Right cardiac atrium (tissue), 5 donors: ENCODE measurements at regions of chr17 and their contacts with region 1.

Region 1: GRCh38 chr17:45385331-45385997 is 47.2 kb downstream of the ARHGAP27 start:
- DNase-seq: peak; percentile 90 to 96 (median 95)
- ATAC-seq: peak; percentile 91 to 94
- H3K4me3 ChIP-seq: no peak overlapping the region
- H3K27ac ChIP-seq: no peak overlapping the region
- H3K4me1 ChIP-seq: peaks cover 1% of the 10 kb centered on the region
- H3K27me3 ChIP-seq: no peaks in the 10 kb centered on the region

Region 2: DNA sequence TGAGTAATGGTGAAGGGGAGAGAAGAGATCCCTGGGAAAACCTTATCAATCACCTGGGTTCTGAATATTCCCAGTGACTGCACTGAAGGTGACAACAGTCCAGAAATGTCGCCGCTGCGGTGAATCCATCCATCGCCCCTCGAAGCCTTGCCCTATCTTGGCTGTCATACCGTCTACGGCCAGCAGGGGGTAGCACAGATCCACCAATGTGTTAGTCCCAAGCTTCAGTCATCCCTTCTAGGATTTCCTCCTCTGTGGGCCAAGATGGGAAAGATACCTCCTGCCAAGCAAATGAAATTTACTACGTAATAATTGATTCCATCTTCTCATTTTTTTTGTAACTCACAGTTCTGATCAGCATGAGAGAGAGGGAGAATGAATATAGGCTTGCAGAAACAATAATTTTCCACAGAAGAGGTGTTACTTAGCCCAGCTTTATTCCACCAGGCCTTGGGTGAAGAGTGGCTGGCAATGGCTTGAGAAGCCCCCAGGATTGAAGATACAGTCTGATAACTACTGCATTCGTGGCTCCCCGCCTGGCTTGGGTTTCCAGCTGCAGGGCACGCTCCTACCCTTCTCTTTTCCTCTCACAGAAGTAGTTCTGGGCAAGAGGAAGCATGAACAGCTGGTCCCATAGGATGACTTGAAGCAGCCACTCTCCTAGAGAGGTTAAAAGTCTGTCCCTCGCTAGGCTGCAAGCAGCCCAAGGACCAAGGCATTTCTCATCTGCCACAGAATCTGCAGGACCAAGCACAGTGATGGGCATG is 166.4 kb before region 1 on chr17:
- intact Hi-C with region 1: loop called (anchors 2 to 5 kb)
- DNase-seq: peak; percentile 82 to 95 (median 92)
- ATAC-seq: peak; percentile 75 to 81
- H3K4me3 ChIP-seq: no peak overlapping the region
- H3K27ac ChIP-seq: no peak overlapping the region
- H3K4me1 ChIP-seq: no peaks in the 10 kb centered on the region
- H3K27me3 ChIP-seq: no peaks in the 10 kb centered on the region

Region 3: DNA sequence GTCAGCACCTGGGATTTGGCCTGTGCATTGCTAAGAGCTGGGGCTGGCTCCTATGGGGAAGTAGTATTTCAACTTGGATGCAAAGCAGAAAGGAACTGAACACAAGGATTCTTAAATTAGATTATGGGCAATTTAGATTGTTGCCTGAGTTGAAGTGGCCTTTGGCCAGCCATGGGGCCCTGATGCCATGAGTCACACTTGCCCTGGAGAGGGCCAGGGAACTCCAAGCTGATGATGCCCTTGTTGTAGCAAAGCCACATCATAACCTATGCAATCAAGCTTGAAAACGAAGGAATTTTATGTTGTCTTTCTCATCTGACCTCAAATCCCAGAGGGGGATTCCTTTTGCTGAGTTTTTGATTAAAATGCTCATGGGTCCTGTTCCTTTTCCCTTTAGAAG is 119.6 kb before region 1 on chr17:
- intact Hi-C with region 1: loop called in 1 of 4 experiments (anchors 5 kb)
- DNase-seq: no peak
- ATAC-seq: no peak
- H3K4me3 ChIP-seq: no peak overlapping the region
- H3K27ac ChIP-seq: no peak overlapping the region
- H3K4me1 ChIP-seq: peaks cover 8% of the 10 kb centered on the region
- H3K27me3 ChIP-seq: no peaks in the 10 kb centered on the region